AG04449 (cell line): ENCODE measurements at regions of chr12 and their contacts with region 1.

Region 1: DNA sequence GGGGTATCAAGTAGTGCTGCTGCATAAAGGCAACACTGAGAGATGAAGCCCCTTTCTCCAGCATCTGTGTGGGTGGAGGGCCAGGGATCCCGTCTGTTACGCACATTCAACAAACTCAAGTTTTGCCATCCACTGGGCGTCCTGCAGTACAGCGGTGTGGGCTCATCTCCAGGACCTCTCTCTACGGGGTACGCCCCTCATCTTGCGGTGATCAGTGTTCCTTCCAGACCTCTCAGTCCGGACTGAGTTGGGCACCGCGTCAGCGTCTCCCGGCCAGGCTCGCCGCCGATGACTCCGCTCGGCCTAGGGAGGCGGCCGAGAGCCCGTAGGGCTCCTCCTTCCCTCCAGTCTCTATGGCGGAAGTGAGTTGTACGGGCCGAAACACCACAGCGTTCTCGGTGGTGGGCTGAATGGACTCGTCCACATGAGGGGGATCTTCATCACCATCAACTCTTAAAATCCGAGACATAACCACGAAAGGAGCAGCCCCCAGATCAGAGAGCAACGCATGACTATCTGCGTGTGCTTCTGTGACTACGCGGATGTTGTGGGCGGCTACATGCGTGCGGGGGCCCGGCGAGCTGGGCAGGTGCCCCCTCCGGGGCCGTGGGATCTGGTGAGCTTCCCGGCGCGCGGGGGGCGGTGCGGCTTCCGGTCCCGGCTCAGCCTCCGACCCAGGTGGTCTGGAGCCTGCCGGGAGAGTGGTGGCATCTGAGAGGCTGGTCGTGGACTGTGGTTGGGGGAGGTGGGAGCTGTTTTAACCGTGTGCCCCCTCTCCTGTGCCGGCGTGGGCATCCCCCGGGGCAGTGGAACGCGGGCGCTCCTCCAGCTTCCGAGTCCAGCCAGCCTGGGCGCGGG is at the start of gene ATG101:
- DNase-seq: peak; percentile 76
- H3K4me3 ChIP-seq: peak within 1 kb of the TSS; percentile 99
- CTCF ChIP-seq: peak; percentile 92

Region 2: DNA sequence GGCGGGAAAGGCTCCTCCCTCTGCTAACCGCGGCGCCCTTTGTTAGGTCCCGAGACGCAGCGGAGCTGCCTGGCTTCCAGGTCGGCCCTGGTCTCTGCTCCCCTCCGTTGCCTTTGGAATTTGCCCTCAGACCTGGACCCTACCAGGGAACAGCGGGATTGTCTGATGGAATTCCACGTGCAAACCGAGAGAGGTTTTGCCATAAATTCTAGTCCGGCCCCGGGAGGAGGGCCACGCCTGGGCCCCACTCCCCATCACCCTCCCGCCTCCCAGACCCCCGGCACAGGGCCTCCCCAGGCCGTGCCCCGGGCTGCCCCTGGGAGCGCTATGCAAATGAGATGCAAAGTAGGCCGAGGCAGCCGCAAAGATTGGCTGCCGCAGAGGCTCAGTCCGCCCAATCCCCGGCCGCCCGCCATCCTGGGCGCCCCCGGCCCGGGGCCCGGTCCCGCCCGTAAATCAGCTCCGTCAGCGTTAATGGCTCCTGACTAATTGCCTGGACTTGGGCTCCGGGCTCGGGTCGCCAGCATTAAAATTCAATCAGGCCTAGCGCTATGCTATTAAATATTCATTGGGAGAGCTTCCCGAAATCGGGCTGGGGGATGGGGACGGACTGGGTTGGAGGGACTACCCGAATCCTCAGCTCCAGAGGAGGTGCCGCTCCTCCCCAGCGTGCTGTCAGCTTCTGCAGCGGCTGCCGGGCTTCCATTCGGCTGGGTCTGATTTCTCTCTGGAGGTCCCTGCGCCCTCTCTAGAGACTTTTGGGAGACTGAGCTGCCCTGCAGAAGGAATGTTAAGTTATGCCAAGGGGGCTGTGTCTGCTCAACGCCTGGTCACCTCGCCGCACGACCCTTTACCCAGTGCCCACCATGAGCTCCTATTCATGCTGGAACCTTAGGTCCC is 205.4 kb before region 1 on chr12:
- CTCF ChIA-PET with region 1: no interaction called
- POLR2A ChIA-PET with region 1: no interaction called
- DNase-seq: no peak
- H3K4me3 ChIP-seq: peak overlapping the region; percentile 40
- CTCF ChIP-seq: no peak

Region 3: GRCh38 chr12:51994959-51995358 is 74.6 kb before region 1 on chr12:
- CTCF ChIA-PET with region 1: interaction called, 19 read pairs
- POLR2A ChIA-PET with region 1: no interaction called
- DNase-seq: no peak
- H3K4me3 ChIP-seq: no peak overlapping the region
- CTCF ChIP-seq: no peak

Region 4: GRCh38 chr12:52032804-52033502 is 36.6 kb before region 1 on chr12:
- CTCF ChIA-PET with region 1: interaction called, 1,695 read pairs
- POLR2A ChIA-PET with region 1: interaction called, 6 read pairs
- DNase-seq: peak; percentile 87
- H3K4me3 ChIP-seq: peak overlapping the region; percentile 53
- CTCF ChIP-seq: no peak

Region 5: GRCh38 chr12:52050761-52051541 is 18.6 kb before region 1 on chr12 and contains the start of gene NR4A1:
- CTCF ChIA-PET with region 1: interaction called, 1,695 read pairs
- POLR2A ChIA-PET with region 1: interaction called, 3 read pairs
- DNase-seq: no peak
- H3K4me3 ChIP-seq: peak within 1 kb of the TSS; percentile 66
- CTCF ChIP-seq: no peak

Region 6: DNA sequence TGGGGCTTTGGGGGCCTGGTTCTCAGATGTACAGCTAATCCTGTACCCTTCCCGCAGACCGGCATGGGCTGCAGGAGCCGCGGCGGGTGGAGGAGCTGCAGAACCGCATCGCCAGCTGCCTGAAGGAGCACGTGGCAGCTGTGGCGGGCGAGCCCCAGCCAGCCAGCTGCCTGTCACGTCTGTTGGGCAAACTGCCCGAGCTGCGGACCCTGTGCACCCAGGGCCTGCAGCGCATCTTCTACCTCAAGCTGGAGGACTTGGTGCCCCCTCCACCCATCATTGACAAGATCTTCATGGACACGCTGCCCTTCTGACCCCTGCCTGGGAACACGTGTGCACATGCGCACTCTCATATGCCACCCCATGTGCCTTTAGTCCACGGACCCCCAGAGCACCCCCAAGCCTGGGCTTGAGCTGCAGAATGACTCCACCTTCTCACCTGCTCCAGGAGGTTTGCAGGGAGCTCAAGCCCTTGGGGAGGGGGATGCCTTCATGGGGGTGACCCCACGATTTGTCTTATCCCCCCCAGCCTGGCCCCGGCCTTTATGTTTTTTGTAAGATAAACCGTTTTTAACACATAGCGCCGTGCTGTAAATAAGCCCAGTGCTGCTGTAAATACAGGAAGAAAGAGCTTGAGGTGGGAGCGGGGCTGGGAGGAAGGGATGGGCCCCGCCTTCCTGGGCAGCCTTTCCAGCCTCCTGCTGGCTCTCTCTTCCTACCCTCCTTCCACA is 10.8 kb before region 1 on chr12:
- CTCF ChIA-PET with region 1: interaction called, 35 read pairs
- POLR2A ChIA-PET with region 1: interaction called, 3 read pairs
- DNase-seq: no peak
- H3K4me3 ChIP-seq: no peak overlapping the region
- CTCF ChIP-seq: no peak

Region 7: GRCh38 chr12:52082988-52083637 is 13.6 kb after region 1 on chr12:
- CTCF ChIA-PET with region 1: interaction called, 204 read pairs
- POLR2A ChIA-PET with region 1: interaction called, 3 read pairs
- DNase-seq: no peak
- H3K4me3 ChIP-seq: no peak overlapping the region
- CTCF ChIP-seq: peak; percentile 99

Region 8: DNA sequence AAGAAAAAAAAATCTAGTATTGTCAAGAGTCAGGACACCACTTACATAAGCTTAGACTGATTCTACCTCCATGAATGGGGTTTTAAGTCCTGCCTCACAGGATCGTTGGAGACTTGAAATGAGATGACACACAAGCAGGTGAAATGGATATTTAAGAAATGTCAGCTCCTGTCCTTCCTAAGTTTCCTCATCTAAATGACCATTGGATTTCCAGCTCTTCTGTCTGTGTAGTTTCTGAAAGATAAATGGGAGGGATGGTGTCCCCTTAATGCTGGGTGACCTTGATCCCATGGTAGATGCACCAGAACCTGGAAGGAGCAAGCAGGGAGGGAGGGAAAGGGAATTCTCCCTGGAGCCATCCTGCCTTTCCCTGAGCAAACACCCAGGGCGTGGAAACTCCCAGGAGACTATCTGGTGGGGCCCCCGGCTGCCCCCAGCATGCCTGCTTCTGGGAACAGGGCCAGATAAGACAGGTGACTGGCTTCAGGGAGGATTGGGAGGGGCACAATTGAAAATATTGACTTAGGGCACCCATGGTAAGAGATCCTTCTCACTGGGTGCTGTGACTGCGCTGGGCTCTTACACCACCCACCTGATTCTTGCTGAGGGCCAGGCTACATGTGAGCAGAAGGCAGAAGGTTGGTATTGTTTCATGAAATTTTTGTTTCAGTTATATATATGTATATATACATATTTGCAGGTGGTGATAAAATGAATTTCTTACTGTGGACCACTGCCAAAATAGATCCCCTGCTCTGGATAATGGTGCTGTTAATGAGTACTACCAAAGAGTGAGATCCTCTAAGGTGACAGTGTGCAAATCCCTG is 825.7 kb after region 1 on chr12:
- CTCF ChIA-PET with region 1: no interaction called
- POLR2A ChIA-PET with region 1: no interaction called
- DNase-seq: no peak
- H3K4me3 ChIP-seq: no peak overlapping the region
- CTCF ChIP-seq: no peak